Heart left ventricle (tissue), 16 donors: ENCODE measurements at regions of chr11 and their contacts with region 1.

Region 1: GRCh38 chr11:18634140-18635032 is at the start of gene SPTY2D1:
- DNase-seq: peak; percentile 99 to 100 (median 99)
- ATAC-seq: peak; percentile 99 to 100 (median 99)
- H3K4me3 ChIP-seq: peak within 1 kb of the TSS; percentile 72 to 99 (median 93)
- H3K27ac ChIP-seq: peak within 1 kb of the TSS; percentile 89 to 97 (median 94)
- H3K4me1 ChIP-seq: peaks cover 0 to 23% (median 15%) of the 10 kb centered on the region in 12 donors
- H3K27me3 ChIP-seq: no peaks in the 10 kb centered on the region
- CTCF ChIP-seq: peak in 1 of 12 donors; percentile 24
- POLR2A ChIP-seq: peak; percentile 4 to 89
- total RNA-seq, gene SPTY2D1: 8.2 to 13.3 (median 11.4) TPM

Region 2: GRCh38 chr11:18321980-18322711 is 312.2 kb before region 1 on chr11 and contains the starts of genes GTF2H1 and HPS5:
- intact Hi-C with region 1: loop called in 5 of 10 experiments (anchors 1 to 10 kb)
- DNase-seq: peak; percentile 95 to 97 (median 97)
- ATAC-seq: peak; percentile 96 to 99 (median 98)
- H3K4me3 ChIP-seq: peak within 1 kb of the TSS; percentile 52 to 93 (median 82)
- H3K27ac ChIP-seq: peak within 1 kb of the TSS; percentile 85 to 100 (median 95)
- H3K4me1 ChIP-seq: peaks cover 0 to 57% (median 35%) of the 10 kb centered on the region in 12 donors
- H3K27me3 ChIP-seq: no peaks in the 10 kb centered on the region
- CTCF ChIP-seq: no peak
- POLR2A ChIP-seq: peak in 1 of 2 donors; percentile 81
- total RNA-seq, gene GTF2H1: 19.8 to 37.2 (median 25.4) TPM
- total RNA-seq, gene HPS5: 6.4 to 19.3 (median 12.5) TPM

Region 3: GRCh38 chr11:18588297-18589252 is 45.8 kb before region 1 on chr11 and contains the start of gene UEVLD:
- intact Hi-C with region 1: loop called in 7 of 10 experiments (anchors 1 to 10 kb)
- DNase-seq: peak; percentile 92 to 94 (median 93)
- ATAC-seq: peak; percentile 93 to 99 (median 97)
- H3K4me3 ChIP-seq: peak within 1 kb of the TSS; percentile 68 to 97 (median 86)
- H3K27ac ChIP-seq: peak within 1 kb of the TSS; percentile 51 to 91 (median 86)
- H3K4me1 ChIP-seq: peaks cover 4 to 42% (median 30%) of the 10 kb centered on the region in 12 donors
- H3K27me3 ChIP-seq: no peaks in the 10 kb centered on the region
- CTCF ChIP-seq: no peak
- POLR2A ChIP-seq: peak in 1 of 2 donors; percentile 73
- total RNA-seq, gene UEVLD: 16.9 to 37.8 (median 23.1) TPM

Region 4: DNA sequence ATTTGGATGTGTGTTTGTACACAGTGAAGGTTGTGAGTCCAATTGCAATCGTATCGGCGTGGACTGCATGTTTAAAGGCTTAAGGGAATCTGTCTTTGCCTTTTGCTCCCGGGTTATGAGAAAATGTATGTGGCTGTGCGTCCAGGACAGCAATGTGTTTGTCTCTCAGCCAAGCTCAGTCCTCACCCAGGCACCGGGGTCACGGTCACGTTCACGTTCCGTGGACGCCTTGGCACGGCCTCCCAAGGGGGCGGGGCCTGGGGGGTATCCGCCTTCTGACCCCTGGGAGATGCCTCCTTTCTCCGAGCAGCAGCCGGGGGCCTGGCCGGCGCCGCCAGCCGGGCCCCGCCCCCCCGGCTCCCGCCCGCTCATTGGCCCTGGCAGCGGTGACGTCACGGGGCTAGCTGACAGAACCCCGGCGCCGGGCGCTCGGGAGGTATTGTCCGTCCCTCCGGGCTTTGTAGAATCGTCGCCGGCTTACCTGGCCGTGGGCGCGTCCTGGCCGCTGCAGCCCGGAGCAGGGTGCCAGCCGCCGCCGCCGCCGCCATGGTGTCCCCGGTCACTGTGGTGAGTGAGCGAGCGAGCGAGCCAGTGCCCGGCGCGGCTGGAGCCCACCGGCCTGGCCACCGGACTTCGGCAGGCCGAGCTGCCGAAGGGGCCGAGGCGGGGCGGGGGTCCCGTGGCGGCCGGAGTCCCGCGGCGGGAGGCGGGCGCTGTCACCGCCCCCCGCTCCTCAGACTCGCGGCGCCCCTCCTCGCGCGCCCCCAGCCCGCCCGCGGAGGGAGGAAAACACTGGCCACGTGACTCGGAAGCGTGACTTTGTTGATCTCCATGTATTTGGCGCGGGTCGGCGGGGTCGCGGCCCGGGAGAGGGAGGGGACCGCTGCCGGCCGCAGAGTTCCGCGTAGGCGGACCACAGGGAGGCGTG is 64.2 kb after region 1 on chr11 and contains the start of gene TMEM86A:
- intact Hi-C with region 1: loop called in 6 of 10 experiments (anchors 1 to 5 kb)
- DNase-seq: peak; percentile 94 to 98 (median 95)
- ATAC-seq: peak; percentile 79 to 96 (median 91)
- H3K4me3 ChIP-seq: peak within 1 kb of the TSS; percentile 64 to 97 (median 86)
- H3K27ac ChIP-seq: peak within 1 kb of the TSS; percentile 38 to 97 (median 87)
- H3K4me1 ChIP-seq: peaks cover 0 to 37% (median 21%) of the 10 kb centered on the region in 12 donors
- H3K27me3 ChIP-seq: no peaks in the 10 kb centered on the region
- CTCF ChIP-seq: no peak
- POLR2A ChIP-seq: peak; percentile 84 to 87
- total RNA-seq, gene TMEM86A: 2.3 to 13.1 (median 4.9) TPM

Region 5: DNA sequence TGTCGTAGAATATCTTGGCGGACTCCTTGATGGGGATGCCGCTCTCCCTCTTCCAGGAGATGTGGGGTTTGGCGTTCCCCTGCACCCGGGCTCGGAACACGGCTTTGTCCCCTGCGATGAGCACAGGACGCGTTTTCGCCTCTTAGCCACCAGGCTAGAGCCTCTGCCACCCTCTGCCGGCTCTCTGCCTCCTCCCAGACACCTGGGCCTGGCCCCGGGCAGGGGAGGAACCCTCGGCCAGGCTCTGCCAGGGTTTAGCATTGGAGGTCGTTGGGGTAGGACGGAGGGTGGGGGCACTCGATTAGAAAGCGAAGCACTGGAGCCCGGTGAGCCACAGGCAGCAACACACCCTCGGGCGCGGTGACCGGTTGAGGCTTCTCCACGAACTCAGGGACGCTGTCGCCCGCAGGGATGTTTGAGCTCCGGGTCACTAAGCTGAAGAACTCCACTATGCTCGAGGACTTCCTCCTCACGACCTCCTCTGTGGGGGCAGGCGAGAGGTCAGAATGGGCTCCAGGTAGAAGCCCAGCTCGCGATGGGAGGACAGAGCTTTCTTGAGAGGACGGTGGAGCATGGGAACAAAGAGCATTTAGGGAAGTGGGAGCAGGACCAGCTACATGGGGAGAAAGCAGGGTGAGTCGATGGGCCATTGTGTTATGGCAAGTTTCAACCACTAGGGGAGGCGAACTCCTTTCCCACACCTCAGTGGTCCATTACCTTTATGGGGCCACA is 87.3 kb after region 1 on chr11:
- intact Hi-C with region 1: loop called in 2 of 10 experiments (anchors 5 kb)
- DNase-seq: no peak
- ATAC-seq: peak; percentile 60 to 80 (median 68)
- H3K4me3 ChIP-seq: peak overlapping the region; percentile 40 to 89 (median 65)
- H3K27ac ChIP-seq: peak overlapping the region in 10 of 12 donors; percentile 10 to 79 (median 60)
- H3K4me1 ChIP-seq: peaks cover 0 to 22% (median 8%) of the 10 kb centered on the region in 12 donors
- H3K27me3 ChIP-seq: no peaks in the 10 kb centered on the region
- CTCF ChIP-seq: peak; percentile 52 to 86 (median 73)
- POLR2A ChIP-seq: no peak